ENCODE measurements at regions of chr22 and their contacts with region 1.

Region 1: GRCh38 chr22:22753526-22754267 is 109.3 kb downstream of the GGTLC2 start:
- DNase-seq: peak; percentile 88
- H3K4me3 Mint-ChIP-seq: no peak overlapping the region
- H3K27ac Mint-ChIP-seq: peak overlapping the region; percentile 40
- H3K4me1 Mint-ChIP-seq: peaks cover 42% of the 10 kb centered on the region
- H3K27me3 Mint-ChIP-seq: no peaks in the 10 kb centered on the region

Region 2: GRCh38 chr22:22698263-22698750 is 55.4 kb before region 1 on chr22:
- CTCF ChIA-PET with region 1: no interaction called
- POLR2A ChIA-PET with region 1: no interaction called
- intact Hi-C with region 1: no loop called
- DNase-seq: no peak
- H3K4me3 Mint-ChIP-seq: no peak overlapping the region
- H3K27ac Mint-ChIP-seq: no peak overlapping the region
- H3K4me1 Mint-ChIP-seq: no peaks in the 10 kb centered on the region
- H3K27me3 Mint-ChIP-seq: no peaks in the 10 kb centered on the region

Region 3: GRCh38 chr22:22710719-22711531 is 42.8 kb before region 1 on chr22:
- CTCF ChIA-PET with region 1: interaction called, 13 read pairs
- POLR2A ChIA-PET with region 1: no interaction called
- intact Hi-C with region 1: loop called (anchors 5 kb)
- DNase-seq: peak; percentile 81
- H3K4me3 Mint-ChIP-seq: no peak overlapping the region
- H3K27ac Mint-ChIP-seq: no peak overlapping the region
- H3K4me1 Mint-ChIP-seq: no peaks in the 10 kb centered on the region
- H3K27me3 Mint-ChIP-seq: no peaks in the 10 kb centered on the region

Region 4: DNA sequence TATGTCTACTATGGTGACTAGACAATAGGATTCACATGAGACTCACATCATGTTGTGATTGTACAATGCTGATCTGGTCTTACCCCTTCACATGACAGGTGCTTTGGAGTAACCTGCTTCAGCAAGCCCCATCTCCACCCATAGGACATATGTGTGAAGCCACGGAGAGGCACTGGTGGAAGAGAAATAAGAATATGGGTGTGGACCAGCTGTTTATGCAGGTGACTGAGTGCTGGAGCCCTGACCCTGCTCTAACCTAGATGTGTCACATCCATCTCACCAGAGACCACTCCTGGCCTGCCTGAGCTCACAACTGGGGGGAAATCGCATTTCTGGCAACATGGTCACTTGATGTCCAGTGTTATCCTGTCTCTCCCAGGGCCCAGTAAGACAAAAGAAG is 10.4 kb after region 1 on chr22:
- CTCF ChIA-PET with region 1: interaction called, 40 read pairs
- POLR2A ChIA-PET with region 1: no interaction called
- intact Hi-C with region 1: no loop called
- DNase-seq: no peak
- H3K4me3 Mint-ChIP-seq: no peak overlapping the region
- H3K27ac Mint-ChIP-seq: no peak overlapping the region
- H3K4me1 Mint-ChIP-seq: peaks cover 5% of the 10 kb centered on the region
- H3K27me3 Mint-ChIP-seq: peaks cover 5% of the 10 kb centered on the region

Region 5: DNA sequence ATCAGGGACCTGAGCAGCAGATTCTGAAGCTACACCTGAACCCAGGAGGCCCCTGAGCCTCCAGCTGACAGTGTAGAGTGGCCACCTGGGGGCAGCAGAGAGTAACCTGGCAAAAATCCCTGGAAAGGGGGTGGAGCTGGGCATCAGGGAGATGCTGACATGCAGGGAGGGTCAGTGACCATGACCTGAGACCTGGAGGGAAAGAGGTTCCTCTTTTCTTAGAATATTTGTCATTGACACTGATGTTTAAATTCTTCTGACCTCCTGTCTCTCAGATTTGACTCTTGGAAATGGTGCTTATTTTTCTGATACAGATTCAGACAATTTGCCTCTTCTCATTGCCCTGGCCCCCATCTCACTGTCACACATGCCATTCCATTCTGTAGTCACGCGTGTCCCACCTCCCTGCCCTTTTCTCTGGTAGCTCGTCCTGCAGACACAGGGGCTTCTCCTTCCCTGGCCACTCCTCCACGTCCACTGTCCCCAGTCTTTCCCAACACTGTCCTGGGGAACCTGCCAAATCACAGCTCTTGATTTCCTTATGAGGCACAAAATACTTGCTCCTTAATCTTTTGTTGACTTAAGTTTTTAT is 16.7 kb after region 1 on chr22:
- CTCF ChIA-PET with region 1: interaction called, 40 read pairs
- POLR2A ChIA-PET with region 1: no interaction called
- intact Hi-C with region 1: no loop called
- DNase-seq: peak; percentile 65
- H3K4me3 Mint-ChIP-seq: no peak overlapping the region
- H3K27ac Mint-ChIP-seq: no peak overlapping the region
- H3K4me1 Mint-ChIP-seq: peaks cover 9% of the 10 kb centered on the region
- H3K27me3 Mint-ChIP-seq: peaks cover 5% of the 10 kb centered on the region

Region 6: GRCh38 chr22:22787786-22788459 is 34.2 kb after region 1 on chr22:
- CTCF ChIA-PET with region 1: interaction called, 37 read pairs
- POLR2A ChIA-PET with region 1: no interaction called
- intact Hi-C with region 1: no loop called
- DNase-seq: peak; percentile 77
- H3K4me3 Mint-ChIP-seq: no peak overlapping the region
- H3K27ac Mint-ChIP-seq: no peak overlapping the region
- H3K4me1 Mint-ChIP-seq: peaks cover 44% of the 10 kb centered on the region
- H3K27me3 Mint-ChIP-seq: no peaks in the 10 kb centered on the region

Region 7: GRCh38 chr22:22877523-22878210 is 124.0 kb after region 1 on chr22:
- CTCF ChIA-PET with region 1: interaction called, 60 read pairs
- POLR2A ChIA-PET with region 1: no interaction called
- intact Hi-C with region 1: no loop called
- DNase-seq: peak; percentile 82
- H3K4me3 Mint-ChIP-seq: no peak overlapping the region
- H3K27ac Mint-ChIP-seq: no peak overlapping the region
- H3K4me1 Mint-ChIP-seq: no peaks in the 10 kb centered on the region
- H3K27me3 Mint-ChIP-seq: no peaks in the 10 kb centered on the region

Region 8: DNA sequence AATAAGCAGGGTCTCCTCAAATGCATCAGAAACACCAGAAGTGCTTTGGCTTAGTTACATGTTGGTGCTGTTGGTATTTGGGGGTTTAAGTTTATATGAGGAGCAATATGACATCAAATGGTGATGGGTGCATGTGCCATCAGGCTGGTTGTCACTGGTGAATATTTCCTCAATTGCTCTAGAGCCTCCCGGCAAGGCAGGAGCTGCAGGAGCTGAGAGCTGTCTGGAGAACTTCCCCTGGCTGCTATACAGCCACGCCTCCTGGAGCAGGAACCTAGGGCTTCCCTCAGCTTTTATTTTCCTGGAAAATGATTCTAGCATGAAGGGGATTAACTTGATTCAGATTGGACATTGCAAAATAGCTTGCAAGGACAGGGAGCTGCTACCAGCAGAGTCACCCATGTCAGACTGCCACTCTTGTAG is 149.7 kb after region 1 on chr22:
- CTCF ChIA-PET with region 1: no interaction called
- POLR2A ChIA-PET with region 1: no interaction called
- intact Hi-C with region 1: no loop called
- DNase-seq: no peak
- H3K4me3 Mint-ChIP-seq: no peak overlapping the region
- H3K27ac Mint-ChIP-seq: no peak overlapping the region
- H3K4me1 Mint-ChIP-seq: no peaks in the 10 kb centered on the region
- H3K27me3 Mint-ChIP-seq: peaks cover 1% of the 10 kb centered on the region

Region 9: DNA sequence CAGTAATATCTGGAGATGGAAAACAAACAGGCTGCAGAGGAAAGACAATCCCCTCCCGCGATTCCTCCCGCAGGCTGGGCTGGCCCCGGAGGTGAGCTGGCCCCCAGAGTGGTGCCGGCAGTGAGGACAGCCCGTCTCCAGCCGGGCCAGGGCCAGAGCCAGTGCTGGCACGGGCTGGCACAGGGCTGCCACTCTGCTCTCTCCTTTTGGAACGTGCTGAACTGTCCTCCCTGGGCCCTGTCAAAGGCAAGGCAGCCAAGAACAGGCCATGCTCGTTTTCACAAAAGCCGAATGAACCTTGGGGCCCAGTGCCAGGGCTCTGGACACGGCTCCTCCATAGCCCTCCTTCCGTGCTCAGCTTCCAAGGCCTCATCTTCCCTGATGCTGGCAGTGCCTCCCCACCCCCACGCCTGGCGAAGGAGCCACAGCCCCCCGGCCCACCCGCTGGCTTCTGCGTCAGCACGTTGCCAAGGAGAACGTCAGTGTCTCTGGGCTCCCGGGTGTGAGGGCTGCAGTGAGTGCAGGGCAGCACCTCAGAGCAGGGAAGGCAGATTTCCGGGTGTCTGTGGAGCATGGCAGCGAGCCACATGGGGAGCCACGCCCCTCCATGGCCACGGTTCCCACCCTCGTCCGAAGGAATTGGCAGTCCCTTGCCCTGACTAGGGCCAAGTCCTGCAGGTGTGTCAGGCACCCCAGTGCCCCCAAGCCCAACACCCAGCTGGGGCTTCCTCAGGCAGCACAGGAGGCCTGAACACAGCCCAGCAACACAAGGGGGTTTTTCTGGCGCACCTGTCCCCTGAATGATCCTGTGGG is 345.2 kb after region 1 on chr22:
- CTCF ChIA-PET with region 1: no interaction called
- POLR2A ChIA-PET with region 1: no interaction called
- intact Hi-C with region 1: no loop called
- DNase-seq: no peak
- H3K4me3 Mint-ChIP-seq: no peak overlapping the region
- H3K27ac Mint-ChIP-seq: no peak overlapping the region
- H3K4me1 Mint-ChIP-seq: no peaks in the 10 kb centered on the region
- H3K27me3 Mint-ChIP-seq: no peaks in the 10 kb centered on the region